Right lobe of liver (tissue), 6 donors: ENCODE measurements at regions of chr22 and their contacts with region 1.

Region 1: DNA sequence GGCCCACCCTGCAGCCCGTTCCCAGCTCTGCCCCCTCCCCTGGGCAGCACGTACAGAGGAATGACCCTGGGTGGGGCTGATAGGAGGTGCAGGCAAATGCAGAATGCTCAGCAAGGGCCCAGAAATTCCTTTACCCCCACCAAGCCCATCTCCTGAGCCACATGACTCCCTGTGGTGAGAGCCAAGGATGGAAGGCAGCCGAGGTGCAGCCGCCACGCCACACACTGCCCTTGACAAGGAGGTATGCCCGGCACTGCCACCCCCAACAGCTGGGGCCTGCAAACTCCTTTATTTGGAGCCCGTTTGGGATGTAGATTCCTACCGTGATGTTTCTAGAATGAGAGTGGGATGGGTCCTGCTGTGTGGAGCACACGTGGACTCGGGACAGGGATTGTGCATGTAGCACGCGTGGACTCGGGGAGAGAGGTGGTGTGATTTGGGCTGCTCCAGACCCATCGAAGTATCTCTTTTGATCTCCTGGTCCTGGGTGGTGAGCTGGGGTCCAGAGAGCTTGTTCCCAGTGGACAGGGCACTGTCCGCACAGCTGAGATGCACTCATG is 12.9 kb downstream of the GTSE1 start:
- DNase-seq: no peak
- ATAC-seq: no peak
- H3K4me3 ChIP-seq: no peak overlapping the region
- H3K27ac ChIP-seq: no peak overlapping the region
- H3K4me1 ChIP-seq: no peaks in the 10 kb centered on the region
- H3K27me3 ChIP-seq: no peaks in the 10 kb centered on the region
- CTCF ChIP-seq: no peak
- POLR2A ChIP-seq: no peak

Region 2: DNA sequence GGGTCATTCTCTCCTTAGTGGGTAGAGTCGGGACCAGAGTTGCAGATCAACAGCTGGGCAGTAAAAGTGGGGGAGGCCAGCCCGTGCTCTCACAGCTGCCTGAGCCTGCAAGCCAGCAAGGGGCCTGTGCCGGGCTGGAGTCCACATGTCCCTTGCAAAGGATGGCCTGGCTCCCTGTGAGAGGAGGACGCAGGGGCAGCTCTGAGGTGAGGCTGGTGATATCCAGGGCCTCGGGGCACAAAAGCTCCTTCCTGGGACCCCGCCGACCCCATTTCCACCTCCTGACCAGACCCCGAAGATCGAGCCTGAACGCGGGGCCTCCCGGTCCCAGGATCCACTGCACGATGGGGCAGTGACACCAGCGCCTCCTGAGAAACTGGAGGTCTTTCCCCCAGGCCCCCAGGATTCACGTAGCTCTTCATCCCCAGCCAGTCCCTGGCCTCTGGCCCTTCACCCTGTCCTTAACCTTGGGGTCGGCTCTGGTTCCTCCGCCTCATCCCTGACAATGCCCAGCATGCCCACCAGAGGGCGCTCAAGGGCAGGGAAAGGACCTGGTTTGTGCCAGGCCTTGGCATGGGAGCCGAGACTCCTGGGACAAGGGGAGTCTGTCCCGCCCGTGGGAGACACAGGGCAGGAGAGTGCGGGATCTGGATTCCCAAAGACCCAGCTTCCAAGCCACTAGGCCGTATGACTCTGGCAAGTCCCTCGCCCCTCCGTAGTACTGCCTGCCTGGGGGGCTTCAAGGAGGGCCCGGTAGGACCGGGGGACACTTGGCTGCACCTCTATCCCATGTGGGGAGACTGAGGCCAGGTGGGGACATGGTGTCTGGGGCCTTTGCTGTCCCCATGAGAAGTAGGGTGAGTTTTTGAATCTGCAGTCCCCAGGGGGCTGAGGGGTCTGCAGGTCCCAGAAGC is 314.9 kb before region 1 on chr22:
- intact Hi-C with region 1: loop called in 1 of 2 experiments (anchors 5 kb)
- DNase-seq: peak; percentile 82 to 87 (median 87)
- ATAC-seq: peak; percentile 56 to 75 (median 64)
- H3K4me3 ChIP-seq: no peak overlapping the region
- H3K27ac ChIP-seq: no peak overlapping the region
- H3K4me1 ChIP-seq: peaks cover 0 to 13% (median 4%) of the 10 kb centered on the region in 4 donors
- H3K27me3 ChIP-seq: no peaks in the 10 kb centered on the region
- CTCF ChIP-seq: peak; percentile 97 to 98 (median 97)
- POLR2A ChIP-seq: no peak

Region 3: DNA sequence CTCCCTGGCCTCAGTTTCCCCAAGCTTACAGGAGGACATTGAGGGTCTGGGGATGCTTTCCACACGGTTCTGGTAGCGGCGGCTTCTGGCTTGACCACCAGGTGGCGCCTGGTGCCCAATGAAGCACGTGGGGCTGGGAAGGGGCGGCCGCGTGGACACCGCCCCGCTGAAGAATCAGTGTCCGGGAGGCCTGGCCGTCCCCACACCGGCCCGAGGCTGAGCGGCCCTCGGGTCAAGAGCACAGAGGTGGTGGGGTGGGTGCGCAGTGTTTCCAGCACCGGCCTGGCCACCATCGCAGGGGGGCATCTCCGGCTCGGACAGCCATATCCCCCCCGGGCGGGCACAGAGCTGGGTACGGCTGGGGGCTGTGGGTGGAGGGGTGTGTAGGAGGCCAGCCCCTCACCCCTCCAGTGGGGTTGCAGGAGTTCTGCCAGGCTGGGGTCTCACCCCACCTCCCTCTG is 187.1 kb before region 1 on chr22:
- intact Hi-C with region 1: loop called (anchors 5 kb)
- DNase-seq: peak; percentile 76 to 81 (median 79)
- ATAC-seq: peak; percentile 26 to 53 (median 50)
- H3K4me3 ChIP-seq: no peak overlapping the region
- H3K27ac ChIP-seq: no peak overlapping the region
- H3K4me1 ChIP-seq: peaks cover 0 to 19% (median 9%) of the 10 kb centered on the region in 4 donors
- H3K27me3 ChIP-seq: no peaks in the 10 kb centered on the region
- CTCF ChIP-seq: peak; percentile 90 to 96 (median 94)
- POLR2A ChIP-seq: no peak